ENCODE measurements at regions of chr5 and their contacts with region 1.

Region 1: GRCh38 chr5:38441453-38442246 is 114.8 kb downstream of the LIFR start:
- DNase-seq: peak; percentile 87
- ATAC-seq: peak; percentile 99
- H3K4me3 ChIP-seq: no peak overlapping the region
- H3K27ac ChIP-seq: no peak overlapping the region
- H3K4me1 ChIP-seq: no peaks in the 10 kb centered on the region
- H3K27me3 ChIP-seq: peaks cover 1 to 7% of the 10 kb centered on the region in 2 experiments; a peak in 2 of 5 replicates
- CTCF ChIP-seq: peak; percentile 99
- EP300 ChIP-seq: no peak
- POLR2A ChIP-seq: no peak
- RAD21 ChIP-seq: peak; percentile 95

Region 2: GRCh38 chr5:38323645-38324295 is 117.9 kb before region 1 on chr5:
- CTCF ChIA-PET with region 1: no interaction called
- POLR2A ChIA-PET with region 1: no interaction called
- in situ Hi-C with region 1: no loop called
- intact Hi-C with region 1: no loop called
- DNase-seq: no peak
- ATAC-seq: no peak
- H3K4me3 ChIP-seq: no peak overlapping the region
- H3K27ac ChIP-seq: no peak overlapping the region
- H3K4me1 ChIP-seq: no peaks in the 10 kb centered on the region
- H3K27me3 ChIP-seq: 0 out of 5 replicates have a peak, but pooled peaks cover 0 to 8% of the 10 kb centered on the region in 2 experiments
- CTCF ChIP-seq: no peak
- EP300 ChIP-seq: no peak
- POLR2A ChIP-seq: no peak
- RAD21 ChIP-seq: no peak

Region 3: DNA sequence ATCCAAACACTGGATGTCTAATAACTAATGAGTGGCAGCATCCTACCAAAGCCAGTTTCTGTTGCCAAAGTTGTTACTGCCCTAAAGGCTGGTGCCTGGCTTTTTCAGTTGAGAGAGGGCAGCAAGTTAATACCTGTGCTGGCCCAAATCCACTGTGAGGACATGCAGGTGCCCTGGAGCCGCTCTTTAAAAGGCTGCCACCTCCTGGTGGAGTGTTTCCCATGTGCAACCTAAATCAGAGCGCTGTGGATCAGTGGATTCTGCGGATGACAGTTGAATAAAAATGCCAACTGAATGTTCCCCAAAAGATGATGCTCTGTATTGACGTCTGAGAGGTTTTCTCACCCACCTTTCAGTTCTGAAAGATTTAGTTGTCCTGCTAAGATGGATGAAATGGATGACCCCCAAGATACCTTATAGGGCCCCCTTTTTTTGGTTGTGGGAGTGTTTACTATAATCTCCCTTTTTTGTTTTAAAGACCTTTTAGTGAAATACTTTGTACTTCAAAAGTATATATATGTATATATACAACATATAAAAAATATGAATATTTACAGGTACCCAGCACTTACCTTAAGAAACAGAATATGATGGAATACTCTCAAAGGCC is 36.9 kb before region 1 on chr5:
- CTCF ChIA-PET with region 1: no interaction called
- POLR2A ChIA-PET with region 1: no interaction called
- in situ Hi-C with region 1: no loop called
- intact Hi-C with region 1: no loop called
- DNase-seq: peak; percentile 24
- ATAC-seq: peak; percentile 83
- H3K4me3 ChIP-seq: no peak overlapping the region
- H3K27ac ChIP-seq: no peak overlapping the region
- H3K4me1 ChIP-seq: no peaks in the 10 kb centered on the region
- H3K27me3 ChIP-seq: peaks cover 0 to 14% of the 10 kb centered on the region in 2 experiments; a peak in 1 of 5 replicates
- CTCF ChIP-seq: peak; percentile 71
- EP300 ChIP-seq: no peak
- POLR2A ChIP-seq: no peak
- RAD21 ChIP-seq: peak; percentile 49; the same call in 1 of the 2 replicates

Region 4: GRCh38 chr5:38426986-38427950 is 14.4 kb before region 1 on chr5:
- CTCF ChIA-PET with region 1: no interaction called
- POLR2A ChIA-PET with region 1: no interaction called
- in situ Hi-C with region 1: no loop called
- intact Hi-C with region 1: no loop called
- DNase-seq: no peak
- ATAC-seq: no peak
- H3K4me3 ChIP-seq: no peak overlapping the region
- H3K27ac ChIP-seq: no peak overlapping the region
- H3K4me1 ChIP-seq: no peaks in the 10 kb centered on the region
- H3K27me3 ChIP-seq: no peaks in the 10 kb centered on the region; a peak in 1 of 5 replicates
- CTCF ChIP-seq: no peak
- EP300 ChIP-seq: no peak
- POLR2A ChIP-seq: no peak
- RAD21 ChIP-seq: no peak

Region 5: DNA sequence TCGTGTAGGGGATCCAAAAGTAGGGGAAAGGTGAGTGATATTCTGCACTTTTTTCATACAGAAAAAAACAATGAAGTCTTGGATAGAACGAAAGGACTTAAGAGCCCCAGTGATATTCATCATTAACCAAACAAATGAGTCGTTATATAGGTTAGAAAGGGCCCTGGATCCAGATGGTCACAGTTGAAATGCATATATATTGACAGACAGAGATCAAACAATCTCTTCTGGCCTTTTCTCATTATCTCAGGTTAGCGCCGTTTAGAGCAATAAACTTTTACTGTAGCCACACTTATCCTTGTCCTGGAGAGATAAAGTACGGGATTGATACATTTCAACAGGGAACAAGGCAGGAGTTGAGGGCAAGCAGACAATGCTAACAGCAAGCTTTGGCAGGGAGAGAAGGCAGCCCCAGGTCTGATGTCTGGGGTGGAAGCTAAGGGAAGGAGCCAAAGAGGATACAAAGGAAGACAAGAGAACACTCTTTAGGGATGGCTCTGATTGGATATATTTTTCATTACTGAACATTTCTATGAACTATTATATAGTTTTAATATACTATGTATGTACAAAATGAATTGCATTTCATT is 37.8 kb after region 1 on chr5:
- CTCF ChIA-PET with region 1: no interaction called
- POLR2A ChIA-PET with region 1: no interaction called
- in situ Hi-C with region 1: no loop called
- intact Hi-C with region 1: loop called (anchors 5 kb)
- DNase-seq: no peak
- ATAC-seq: no peak
- H3K4me3 ChIP-seq: no peak overlapping the region
- H3K27ac ChIP-seq: no peak overlapping the region
- H3K4me1 ChIP-seq: no peaks in the 10 kb centered on the region
- H3K27me3 ChIP-seq: no peaks in the 10 kb centered on the region
- CTCF ChIP-seq: no peak
- EP300 ChIP-seq: no peak
- POLR2A ChIP-seq: no peak
- RAD21 ChIP-seq: no peak

Region 6: DNA sequence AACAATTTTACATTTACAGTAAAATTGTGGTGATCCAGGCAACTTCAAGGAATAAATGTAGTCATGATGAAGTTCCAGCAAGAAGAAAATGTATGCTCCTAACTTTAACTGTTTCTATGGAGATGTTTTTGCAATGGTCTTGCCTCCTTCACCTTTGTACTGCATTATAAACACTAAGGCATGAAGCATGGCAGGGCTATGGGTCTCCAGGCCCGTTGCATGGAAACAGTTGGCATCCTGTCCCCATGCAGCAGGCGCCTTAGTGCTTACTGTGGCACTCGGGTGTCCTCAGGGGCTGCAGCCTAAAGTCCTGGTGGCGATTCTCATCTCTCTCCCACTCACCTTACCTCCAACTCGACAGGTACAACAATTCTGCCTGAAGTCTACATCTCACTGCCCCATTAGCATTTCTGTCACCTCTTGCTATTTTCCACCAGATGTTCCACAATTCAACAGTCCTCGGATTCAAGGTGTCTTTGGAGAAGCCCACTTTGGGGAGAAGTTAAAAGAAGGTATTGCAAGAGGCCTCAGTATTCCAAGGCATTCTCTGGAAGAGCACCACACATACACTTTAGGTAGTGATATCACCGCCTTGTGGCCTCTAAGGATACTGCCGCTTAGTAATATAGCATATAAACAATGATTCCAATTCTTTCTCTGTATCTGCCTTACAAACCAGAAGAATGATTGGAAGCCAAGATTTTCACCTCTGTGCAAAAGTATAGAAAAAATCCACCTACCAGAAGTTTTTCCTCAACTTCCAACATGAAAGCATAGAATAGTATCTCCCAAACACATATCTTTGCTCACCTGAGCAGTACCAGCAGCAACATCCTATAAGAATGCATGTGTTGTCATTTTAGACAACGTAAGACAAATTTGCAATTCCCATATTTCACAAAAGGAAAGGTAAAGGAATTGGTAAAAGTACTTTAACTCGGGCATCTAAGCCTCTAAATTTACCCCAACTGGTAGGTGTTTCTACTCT is 109.7 kb after region 1 on chr5:
- CTCF ChIA-PET with region 1: interaction called, 13 read pairs
- POLR2A ChIA-PET with region 1: interaction called, 5 read pairs
- in situ Hi-C with region 1: loop called (anchors 10 kb)
- intact Hi-C with region 1: loop called (anchors 1 kb)
- DNase-seq: peak; percentile 59
- ATAC-seq: peak; percentile 56
- H3K4me3 ChIP-seq: peak overlapping the region in 1 of 3 experiments; percentile 19; a peak in 1 of 6 replicates
- H3K27ac ChIP-seq: peak overlapping the region; percentile 94
- H3K4me1 ChIP-seq: peaks cover 79% of the 10 kb centered on the region
- H3K27me3 ChIP-seq: no peaks in the 10 kb centered on the region; a peak in 1 of 5 replicates
- CTCF ChIP-seq: peak; percentile 78
- EP300 ChIP-seq: no peak
- POLR2A ChIP-seq: no peak
- RAD21 ChIP-seq: peak; percentile 64; the same call in 1 of the 2 replicates

Region 7: GRCh38 chr5:38666668-38667498 is 225.2 kb after region 1 on chr5:
- CTCF ChIA-PET with region 1: interaction called, 27 read pairs
- POLR2A ChIA-PET with region 1: no interaction called
- in situ Hi-C with region 1: loop called (anchors 5 kb)
- intact Hi-C with region 1: loop called (anchors 1 kb)
- DNase-seq: peak; percentile 25
- ATAC-seq: peak; percentile 98
- H3K4me3 ChIP-seq: no peak overlapping the region
- H3K27ac ChIP-seq: no peak overlapping the region
- H3K4me1 ChIP-seq: peaks cover 7% of the 10 kb centered on the region
- H3K27me3 ChIP-seq: no peaks in the 10 kb centered on the region; a peak in 2 of 5 replicates
- CTCF ChIP-seq: peak; percentile 73
- EP300 ChIP-seq: no peak
- POLR2A ChIP-seq: no peak
- RAD21 ChIP-seq: peak; percentile 60; the same call in 1 of the 2 replicates

Region 8: DNA sequence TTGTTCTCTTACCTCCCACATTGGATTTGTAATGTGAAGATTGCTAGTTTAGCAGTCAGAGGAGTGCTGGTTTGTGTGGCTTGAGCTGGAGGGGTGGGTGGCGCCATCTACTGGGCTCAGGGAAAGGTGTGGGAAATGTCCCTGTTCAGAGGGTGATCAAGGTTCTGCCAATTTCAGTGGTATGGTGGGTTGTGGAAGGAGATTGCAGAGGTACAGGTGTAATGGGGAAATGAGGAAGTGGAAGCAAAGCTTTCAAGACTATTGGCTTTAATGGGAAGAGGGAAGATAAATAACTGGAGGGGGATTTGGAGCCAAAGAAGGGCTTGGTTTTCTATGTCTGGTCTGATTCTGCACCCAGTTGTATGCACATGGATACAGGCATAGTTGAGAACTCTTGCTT is 480.5 kb after region 1 on chr5:
- CTCF ChIA-PET with region 1: no interaction called
- POLR2A ChIA-PET with region 1: no interaction called
- in situ Hi-C with region 1: no loop called
- intact Hi-C with region 1: loop called (anchors 1 kb)
- DNase-seq: peak; percentile 29
- ATAC-seq: peak; percentile 92
- H3K4me3 ChIP-seq: no peak overlapping the region
- H3K27ac ChIP-seq: no peak overlapping the region
- H3K4me1 ChIP-seq: peaks cover 8% of the 10 kb centered on the region
- H3K27me3 ChIP-seq: no peaks in the 10 kb centered on the region
- CTCF ChIP-seq: peak; percentile 80
- EP300 ChIP-seq: no peak
- POLR2A ChIP-seq: no peak
- RAD21 ChIP-seq: peak; percentile 47; the same call in 1 of the 2 replicates